A549 (cell line): ENCODE measurements at regions of chrX and their contacts with region 1.

Region 1: DNA sequence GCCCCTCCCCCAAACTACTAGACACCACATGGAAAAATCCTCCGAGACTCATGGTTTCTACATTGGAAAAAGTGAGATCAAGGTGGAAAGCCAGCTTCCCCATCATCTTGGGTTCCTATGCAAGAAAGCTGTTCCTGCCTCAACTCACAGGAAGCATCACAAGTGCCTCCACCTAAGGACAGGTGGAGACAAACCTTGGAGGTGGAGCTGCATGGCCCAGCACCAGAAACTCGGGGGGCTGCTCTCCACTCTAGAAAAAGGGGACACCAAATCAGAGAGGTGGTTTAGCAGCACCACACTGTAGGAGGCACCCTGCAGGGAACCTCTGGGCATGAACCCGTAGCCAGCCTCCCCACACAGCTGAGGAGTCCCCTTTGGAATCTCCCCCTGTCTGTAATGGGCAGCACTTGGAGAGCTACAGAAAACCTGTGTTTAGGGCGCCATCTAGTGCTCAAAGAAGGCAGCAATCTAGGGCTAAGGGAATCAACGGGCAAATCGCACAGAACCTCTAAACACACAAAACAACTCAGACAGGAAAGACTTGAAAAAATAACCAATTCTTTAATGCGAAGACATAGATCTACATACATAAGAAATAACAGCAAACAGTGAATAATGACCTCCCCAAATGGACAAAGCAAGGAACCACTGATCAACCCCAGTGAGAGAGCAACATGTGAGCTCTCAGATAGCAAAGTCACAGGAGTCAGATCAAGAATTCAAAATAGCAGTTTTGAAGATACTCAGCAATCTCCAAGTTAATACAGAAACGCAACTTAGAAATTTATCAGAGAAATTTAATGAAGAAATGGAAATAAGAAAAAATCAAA is 37.0 kb upstream of the ZBTB33 start:
- DNase-seq: peak; percentile 55 to 57
- ATAC-seq: peak; percentile 94 to 97
- H3K4me3 ChIP-seq: no peak overlapping the region
- H3K27ac ChIP-seq: no peak overlapping the region
- H3K4me1 ChIP-seq: no peaks in the 10 kb centered on the region
- CTCF ChIP-seq: peak; percentile 62
- EP300 ChIP-seq: no peak
- POLR2A ChIP-seq: no peak
- RAD21 ChIP-seq: peak; percentile 54 to 59

Region 2: DNA sequence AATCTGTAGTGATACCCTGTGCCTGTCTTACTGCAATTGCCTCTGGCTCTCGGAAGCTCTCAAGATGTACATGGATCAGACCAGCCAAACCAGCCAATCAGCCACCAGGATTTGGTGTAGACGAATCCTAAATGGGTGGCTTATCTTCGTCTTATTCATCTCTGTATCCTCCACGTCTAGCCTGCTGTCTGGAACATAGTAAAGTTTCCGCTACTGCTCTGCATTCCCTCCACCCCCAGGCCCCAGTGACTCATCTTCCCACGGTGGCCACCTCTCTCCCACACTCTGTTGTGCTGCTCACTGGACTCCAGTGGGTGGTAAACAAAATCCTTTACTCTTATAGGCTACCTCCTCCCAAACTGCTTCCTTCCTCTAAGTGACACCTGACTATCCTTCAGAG is 558.5 kb before region 1 on chrX:
- CTCF ChIA-PET with region 1: no interaction called
- POLR2A ChIA-PET with region 1: no interaction called
- DNase-seq: peak in 1 of 2 experiments; percentile 11
- ATAC-seq: peak in 1 of 2 experiments; percentile 38; a peak in 3 of 6 replicates
- H3K4me3 ChIP-seq: no peak overlapping the region
- H3K27ac ChIP-seq: no peak overlapping the region
- H3K4me1 ChIP-seq: no peaks in the 10 kb centered on the region
- CTCF ChIP-seq: no peak
- EP300 ChIP-seq: no peak
- POLR2A ChIP-seq: no peak
- RAD21 ChIP-seq: no peak

Region 3: DNA sequence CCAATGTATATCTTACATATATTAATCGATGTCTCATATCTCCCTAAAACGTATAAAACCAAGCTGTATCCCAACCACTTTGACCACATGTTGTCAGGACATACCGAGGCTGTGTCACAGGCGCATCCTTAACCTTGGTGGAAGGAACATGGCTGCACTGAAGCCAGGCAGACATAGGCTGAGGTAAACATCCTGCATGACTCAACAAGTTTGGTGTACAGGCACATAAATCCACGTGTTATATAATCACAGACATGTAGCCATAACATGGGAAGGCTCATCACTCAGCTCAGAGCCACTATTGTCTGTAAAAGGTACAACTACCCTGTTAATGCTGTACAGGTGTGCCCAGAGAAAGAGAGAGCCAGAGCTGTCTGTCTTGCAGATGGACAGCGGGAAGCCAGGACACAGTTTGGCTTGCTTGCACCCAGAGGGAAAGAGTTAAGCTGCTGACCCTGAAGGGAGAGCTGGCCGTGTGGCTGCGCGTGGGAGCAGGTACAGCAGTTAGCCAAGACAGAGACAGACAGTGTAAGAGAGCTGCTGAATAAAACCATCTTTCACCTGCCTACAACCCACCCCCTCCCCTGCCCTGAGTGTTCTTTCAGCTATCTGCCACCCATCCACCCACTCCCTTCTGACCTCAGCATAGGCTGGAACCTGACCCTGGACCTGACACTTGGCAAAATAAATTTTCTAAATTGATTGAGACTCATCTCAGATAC is 14.7 kb after region 1 on chrX:
- CTCF ChIA-PET with region 1: interaction called, 21 read pairs
- POLR2A ChIA-PET with region 1: no interaction called
- DNase-seq: no peak
- ATAC-seq: no peak
- H3K4me3 ChIP-seq: no peak overlapping the region
- H3K27ac ChIP-seq: no peak overlapping the region
- H3K4me1 ChIP-seq: no peaks in the 10 kb centered on the region
- CTCF ChIP-seq: no peak
- EP300 ChIP-seq: no peak
- POLR2A ChIP-seq: no peak
- RAD21 ChIP-seq: no peak